Activated CD4-positive, alpha-beta T cell treated with anti-CD3 and anti-CD28 coated beads for 36 hours (primary cell): ENCODE measurements at regions of chr1 and their contacts with region 1.

Region 1: DNA sequence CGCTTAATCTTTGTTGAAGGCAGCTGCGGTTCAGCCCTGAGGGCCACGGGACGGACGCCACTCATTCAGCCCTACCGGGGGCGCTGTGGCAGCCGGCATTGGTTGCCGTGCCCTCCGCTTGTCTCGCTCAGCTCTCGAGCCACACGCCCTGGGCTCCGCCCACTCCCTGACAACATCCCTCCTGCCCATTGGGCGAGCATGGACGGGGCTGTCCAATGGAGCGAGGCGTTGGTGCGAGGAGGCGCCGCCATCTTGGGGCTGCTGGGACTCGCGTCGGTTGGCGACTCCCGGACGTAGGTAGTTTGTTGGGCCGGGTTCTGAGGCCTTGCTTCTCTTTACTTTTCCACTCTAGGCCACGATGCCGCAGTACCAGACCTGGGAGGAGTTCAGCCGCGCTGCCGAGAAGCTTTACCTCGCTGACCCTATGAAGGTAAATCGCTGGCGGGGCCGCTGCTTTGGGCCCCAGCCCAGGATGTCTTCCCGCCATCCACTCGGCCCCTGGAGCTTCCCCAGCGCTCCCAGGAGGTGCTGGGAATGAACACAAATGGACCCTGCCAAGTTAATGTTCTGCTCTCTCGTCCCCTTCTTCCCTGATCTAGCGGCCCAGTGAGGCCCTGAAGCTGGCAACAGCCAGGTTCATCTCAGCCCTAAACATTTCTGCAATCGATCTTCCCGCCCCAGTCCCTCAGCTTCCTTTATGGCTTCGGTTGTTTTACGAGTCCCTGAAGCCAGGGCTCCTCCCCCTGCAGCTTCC is at the start of gene SRP9:
- DNase-seq: peak; percentile 99
- ATAC-seq: peak; percentile 97
- H3K4me3 Mint-ChIP-seq: no peak within 1 kb of the TSS
- H3K27ac Mint-ChIP-seq: no peak within 1 kb of the TSS
- H3K4me1 Mint-ChIP-seq: peaks cover 31% of the 10 kb centered on the region
- H3K27me3 Mint-ChIP-seq: no peaks in the 10 kb centered on the region
- total RNA-seq, gene SRP9: 263 to 308 TPM

Region 2: DNA sequence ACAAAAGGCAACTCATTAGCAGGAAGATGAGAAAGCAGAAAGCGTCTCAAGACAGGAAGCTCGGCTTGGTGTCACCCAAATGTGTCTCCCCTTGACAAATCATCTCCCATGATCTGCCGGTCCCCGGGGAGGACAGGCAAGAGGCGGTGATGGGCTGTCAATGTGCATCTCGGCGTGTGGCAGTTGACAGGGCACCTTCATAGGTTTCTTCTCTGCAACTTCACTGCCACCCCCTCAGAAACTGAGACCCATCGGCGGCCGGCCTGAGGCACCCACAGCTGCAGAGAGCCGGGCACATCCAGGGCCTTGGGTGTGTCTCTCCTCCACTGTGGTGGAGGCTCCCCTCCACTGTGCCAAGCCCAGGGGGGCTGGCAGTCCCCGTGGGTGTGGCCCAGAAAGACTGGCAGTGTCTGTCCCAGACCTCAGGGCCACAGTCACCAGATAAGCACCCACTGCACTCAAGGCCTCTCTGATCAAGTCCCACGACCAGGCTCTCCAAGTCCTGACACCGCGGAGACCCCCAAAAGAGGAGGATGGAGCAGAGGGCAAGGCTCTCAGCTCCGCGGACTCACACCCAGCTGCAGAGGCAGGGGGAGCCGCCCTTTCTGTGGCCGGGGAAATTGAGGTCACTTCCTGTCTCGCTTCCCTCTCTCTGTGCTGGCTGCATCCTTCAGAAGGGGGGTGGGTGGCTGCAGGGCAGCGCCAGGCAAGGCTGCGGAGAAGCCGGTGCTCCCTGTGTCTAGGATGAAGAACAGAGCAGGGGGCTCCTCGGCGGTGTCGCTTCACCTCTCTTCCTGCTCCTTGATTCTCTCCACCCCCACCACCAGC is 310.4 kb before region 1 on chr1:
- CTCF ChIA-PET with region 1: interaction called, 3 read pairs
- POLR2A ChIA-PET with region 1: interaction called, 10 read pairs
- intact Hi-C with region 1: loop called in 1 of 2 experiments (anchors 1 kb)
- DNase-seq: peak; percentile 90
- ATAC-seq: peak; percentile 90
- H3K4me3 Mint-ChIP-seq: peak overlapping the region; percentile 85
- H3K27ac Mint-ChIP-seq: peak overlapping the region; percentile 98
- H3K4me1 Mint-ChIP-seq: peaks cover 25% of the 10 kb centered on the region
- H3K27me3 Mint-ChIP-seq: no peaks in the 10 kb centered on the region

Region 3: GRCh38 chr1:225652729-225653462 is 124.9 kb before region 1 on chr1 and contains the start of gene ENAH:
- CTCF ChIA-PET with region 1: interaction called, 7 read pairs
- POLR2A ChIA-PET with region 1: no interaction called
- intact Hi-C with region 1: loop called in 1 of 2 experiments (anchors 2 kb)
- DNase-seq: peak; percentile 65
- ATAC-seq: peak; percentile 69
- H3K4me3 Mint-ChIP-seq: peak within 1 kb of the TSS; percentile 75
- H3K27ac Mint-ChIP-seq: peak within 1 kb of the TSS; percentile 15
- H3K4me1 Mint-ChIP-seq: peaks cover 12% of the 10 kb centered on the region
- H3K27me3 Mint-ChIP-seq: peaks cover 31% of the 10 kb centered on the region
- total RNA-seq, gene ENAH: 0.62 to 0.81 TPM

Region 4: GRCh38 chr1:225691377-225691776 is 86.4 kb before region 1 on chr1:
- CTCF ChIA-PET with region 1: no interaction called
- POLR2A ChIA-PET with region 1: no interaction called
- intact Hi-C with region 1: no loop called
- DNase-seq: no peak
- ATAC-seq: no peak
- H3K4me3 Mint-ChIP-seq: no peak overlapping the region
- H3K27ac Mint-ChIP-seq: no peak overlapping the region
- H3K4me1 Mint-ChIP-seq: no peaks in the 10 kb centered on the region
- H3K27me3 Mint-ChIP-seq: peaks cover 2% of the 10 kb centered on the region

Region 5: GRCh38 chr1:225794954-225795353 is 17.2 kb after region 1 on chr1:
- CTCF ChIA-PET with region 1: interaction called, 13 read pairs
- POLR2A ChIA-PET with region 1: interaction called, 9 read pairs
- intact Hi-C with region 1: loop called in 1 of 2 experiments (anchors 2 kb)
- DNase-seq: no peak
- ATAC-seq: no peak
- H3K4me3 Mint-ChIP-seq: no peak overlapping the region
- H3K27ac Mint-ChIP-seq: no peak overlapping the region
- H3K4me1 Mint-ChIP-seq: no peaks in the 10 kb centered on the region
- H3K27me3 Mint-ChIP-seq: no peaks in the 10 kb centered on the region

Region 6: GRCh38 chr1:225881969-225882693 is 104.4 kb after region 1 on chr1 and contains the start of gene TMEM63A:
- CTCF ChIA-PET with region 1: interaction called, 5 read pairs
- POLR2A ChIA-PET with region 1: interaction called, 11 read pairs
- intact Hi-C with region 1: loop called (anchors 1 to 2 kb)
- DNase-seq: peak; percentile 92
- ATAC-seq: peak; percentile 55
- H3K4me3 Mint-ChIP-seq: peak within 1 kb of the TSS; percentile 89
- H3K27ac Mint-ChIP-seq: peak within 1 kb of the TSS; percentile 91
- H3K4me1 Mint-ChIP-seq: peaks cover 50% of the 10 kb centered on the region
- H3K27me3 Mint-ChIP-seq: no peaks in the 10 kb centered on the region
- total RNA-seq, gene TMEM63A: 47.3 to 48.0 TPM

Region 7: DNA sequence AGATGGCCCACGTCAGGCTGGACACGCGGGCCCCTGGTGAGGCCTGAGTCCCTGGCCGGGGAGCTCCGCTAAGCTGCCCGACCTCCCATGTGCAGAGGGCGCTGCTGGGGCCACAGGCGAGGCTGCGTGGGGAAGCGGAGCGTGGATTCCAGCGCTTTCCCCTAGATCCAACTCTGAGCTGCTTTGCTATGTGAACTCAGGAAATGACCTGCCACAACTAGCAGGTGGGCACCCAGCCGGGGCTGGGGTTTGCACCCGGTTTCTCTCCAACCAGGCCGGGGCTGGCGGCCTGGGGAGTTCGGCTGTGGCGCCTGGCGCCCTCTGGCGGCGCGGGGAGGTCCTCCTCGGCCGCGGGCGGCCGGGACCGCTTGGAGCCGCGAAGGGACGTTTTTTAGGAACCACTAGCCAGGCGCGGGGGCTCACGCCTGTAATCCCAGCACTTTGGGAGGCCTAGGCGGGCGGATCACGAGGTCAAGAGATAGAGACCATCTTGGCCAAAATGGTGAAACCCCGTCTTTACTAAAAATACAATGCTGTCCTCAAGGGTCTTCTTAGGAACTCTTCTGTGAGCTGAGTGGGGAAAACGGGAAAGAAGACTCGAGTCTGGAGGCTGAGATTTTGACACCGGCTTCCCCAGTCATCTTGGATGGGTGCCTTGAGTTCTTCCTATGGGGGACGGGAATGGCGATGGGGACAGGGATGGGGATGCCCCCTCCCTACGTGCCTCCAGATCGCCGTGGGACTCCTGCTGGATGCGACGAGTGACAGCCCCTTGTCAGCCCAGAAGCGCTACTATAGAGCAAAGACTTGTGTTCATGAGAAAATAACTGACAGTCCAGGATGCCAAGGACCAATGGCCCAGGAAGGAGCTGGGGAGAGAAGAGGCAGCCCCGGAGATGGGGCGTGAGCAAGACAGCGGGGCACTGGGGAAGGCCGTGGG is 133.7 kb after region 1 on chr1:
- CTCF ChIA-PET with region 1: interaction called, 9 read pairs
- POLR2A ChIA-PET with region 1: interaction called, 3 read pairs
- intact Hi-C with region 1: loop called (anchors 1 to 5 kb)
- DNase-seq: peak; percentile 85
- ATAC-seq: peak; percentile 92
- H3K4me3 Mint-ChIP-seq: no peak overlapping the region
- H3K27ac Mint-ChIP-seq: no peak overlapping the region
- H3K4me1 Mint-ChIP-seq: peaks cover 18% of the 10 kb centered on the region
- H3K27me3 Mint-ChIP-seq: no peaks in the 10 kb centered on the region

Region 8: DNA sequence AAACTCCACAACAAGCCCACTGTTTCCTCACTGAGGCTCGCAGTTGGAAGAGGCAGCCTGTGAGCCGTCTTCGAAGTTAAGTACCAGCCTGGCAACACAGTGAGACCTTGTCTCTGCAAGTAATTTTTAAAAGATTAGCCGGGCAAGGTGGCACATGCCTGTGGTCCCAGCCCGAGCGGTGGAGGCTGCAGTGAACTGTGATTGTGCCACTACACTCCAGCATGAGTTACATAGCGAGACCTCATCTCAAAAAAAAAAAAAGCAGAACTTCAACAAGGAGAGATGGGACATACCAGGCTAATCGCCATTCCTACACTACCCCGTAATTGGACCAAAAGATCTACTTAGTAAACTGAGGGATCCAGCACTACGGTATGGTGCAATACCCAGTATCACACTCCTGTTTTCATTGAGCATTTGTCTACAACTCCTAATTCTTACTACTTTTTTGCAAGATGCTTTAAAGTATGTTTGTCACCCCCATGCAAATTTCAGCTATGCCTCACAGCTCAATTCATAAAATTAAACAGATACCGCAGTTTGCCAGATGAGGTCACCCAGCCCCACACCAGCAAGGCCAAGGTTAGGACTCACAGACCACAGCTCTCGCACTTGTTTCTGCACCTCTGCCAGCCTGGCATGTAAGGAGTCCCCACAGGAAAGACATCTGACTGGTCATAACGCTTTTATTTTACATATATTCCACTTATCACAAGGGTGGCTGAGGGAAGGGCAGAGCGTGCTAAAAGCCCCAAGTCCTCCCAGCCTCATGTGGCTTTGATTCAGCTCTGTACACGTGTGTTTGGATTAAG is 200.4 kb after region 1 on chr1:
- CTCF ChIA-PET with region 1: no interaction called
- POLR2A ChIA-PET with region 1: no interaction called
- intact Hi-C with region 1: loop called (anchors 1 to 5 kb)
- DNase-seq: no peak
- ATAC-seq: no peak
- H3K4me3 Mint-ChIP-seq: no peak overlapping the region
- H3K27ac Mint-ChIP-seq: no peak overlapping the region
- H3K4me1 Mint-ChIP-seq: peaks cover 6% of the 10 kb centered on the region
- H3K27me3 Mint-ChIP-seq: no peaks in the 10 kb centered on the region

Region 9: GRCh38 chr1:226255380-226255779 is 477.6 kb after region 1 on chr1:
- CTCF ChIA-PET with region 1: no interaction called
- POLR2A ChIA-PET with region 1: no interaction called
- intact Hi-C with region 1: no loop called
- DNase-seq: no peak
- ATAC-seq: no peak
- H3K4me3 Mint-ChIP-seq: no peak overlapping the region
- H3K27ac Mint-ChIP-seq: no peak overlapping the region
- H3K4me1 Mint-ChIP-seq: no peaks in the 10 kb centered on the region
- H3K27me3 Mint-ChIP-seq: no peaks in the 10 kb centered on the region